Activated CD4-positive, alpha-beta memory T cell treated with anti-CD3 and anti-CD28 coated beads for 36 hours (primary cell): ENCODE measurements at regions of chr17 and their contacts with region 1.

Region 1: DNA sequence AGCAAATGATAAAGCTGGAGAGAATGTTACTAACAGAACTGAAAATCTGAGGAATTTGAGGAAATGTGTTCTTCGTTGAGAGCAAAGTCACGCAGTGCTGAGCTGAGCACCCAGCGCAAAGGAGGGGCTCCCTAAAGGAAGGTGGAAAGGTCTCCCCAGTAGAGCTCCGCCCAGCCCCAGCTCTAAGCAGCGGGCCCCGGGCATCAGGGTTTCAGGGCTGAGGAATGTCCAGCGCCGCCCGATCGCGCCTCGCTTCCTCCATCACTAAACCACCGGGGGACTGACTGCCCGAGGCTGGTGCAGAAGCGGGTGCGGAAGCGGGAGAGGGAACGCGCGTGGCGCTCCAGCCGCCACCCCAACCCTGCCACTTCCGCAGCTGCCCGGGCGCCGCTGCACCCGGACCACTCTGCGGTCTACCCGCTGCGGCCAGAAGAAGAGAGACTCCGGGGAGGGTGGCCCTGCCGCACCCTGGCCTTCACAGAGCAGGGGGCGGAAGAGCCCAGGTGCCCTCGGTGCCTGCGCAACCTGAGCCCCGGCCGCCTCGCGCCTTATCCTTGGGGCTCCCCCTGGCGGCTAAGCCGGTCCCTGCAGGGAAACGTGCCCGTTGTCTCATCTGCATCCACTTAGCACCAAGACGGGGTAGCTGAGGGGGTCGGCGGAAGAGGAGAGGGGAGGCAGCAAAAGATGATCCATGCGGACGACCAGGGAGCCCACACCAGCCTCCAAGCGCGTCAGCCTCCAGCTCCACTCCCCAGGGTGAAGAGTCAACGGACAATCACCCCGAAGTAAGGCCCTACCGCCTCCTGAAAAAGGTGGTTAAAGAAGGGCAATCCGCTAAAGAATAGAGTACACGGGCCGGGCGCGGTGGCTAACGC is 12.4 kb upstream of the GUCY2D start:
- DNase-seq: peak; percentile 95
- H3K4me3 Mint-ChIP-seq: peak overlapping the region; percentile 51
- H3K27ac Mint-ChIP-seq: peak overlapping the region; percentile 66
- H3K4me1 Mint-ChIP-seq: peaks cover 22% of the 10 kb centered on the region
- H3K27me3 Mint-ChIP-seq: peaks cover under 1% of the 10 kb centered on the region

Region 2: GRCh38 chr17:7740481-7741001 is 249.5 kb before region 1 on chr17:
- CTCF ChIA-PET with region 1: interaction called, 23 read pairs
- POLR2A ChIA-PET with region 1: no interaction called
- intact Hi-C with region 1: loop called (anchors 2 kb)
- DNase-seq: no peak
- H3K4me3 Mint-ChIP-seq: no peak overlapping the region
- H3K27ac Mint-ChIP-seq: no peak overlapping the region
- H3K4me1 Mint-ChIP-seq: no peaks in the 10 kb centered on the region
- H3K27me3 Mint-ChIP-seq: peaks cover 11% of the 10 kb centered on the region

Region 3: DNA sequence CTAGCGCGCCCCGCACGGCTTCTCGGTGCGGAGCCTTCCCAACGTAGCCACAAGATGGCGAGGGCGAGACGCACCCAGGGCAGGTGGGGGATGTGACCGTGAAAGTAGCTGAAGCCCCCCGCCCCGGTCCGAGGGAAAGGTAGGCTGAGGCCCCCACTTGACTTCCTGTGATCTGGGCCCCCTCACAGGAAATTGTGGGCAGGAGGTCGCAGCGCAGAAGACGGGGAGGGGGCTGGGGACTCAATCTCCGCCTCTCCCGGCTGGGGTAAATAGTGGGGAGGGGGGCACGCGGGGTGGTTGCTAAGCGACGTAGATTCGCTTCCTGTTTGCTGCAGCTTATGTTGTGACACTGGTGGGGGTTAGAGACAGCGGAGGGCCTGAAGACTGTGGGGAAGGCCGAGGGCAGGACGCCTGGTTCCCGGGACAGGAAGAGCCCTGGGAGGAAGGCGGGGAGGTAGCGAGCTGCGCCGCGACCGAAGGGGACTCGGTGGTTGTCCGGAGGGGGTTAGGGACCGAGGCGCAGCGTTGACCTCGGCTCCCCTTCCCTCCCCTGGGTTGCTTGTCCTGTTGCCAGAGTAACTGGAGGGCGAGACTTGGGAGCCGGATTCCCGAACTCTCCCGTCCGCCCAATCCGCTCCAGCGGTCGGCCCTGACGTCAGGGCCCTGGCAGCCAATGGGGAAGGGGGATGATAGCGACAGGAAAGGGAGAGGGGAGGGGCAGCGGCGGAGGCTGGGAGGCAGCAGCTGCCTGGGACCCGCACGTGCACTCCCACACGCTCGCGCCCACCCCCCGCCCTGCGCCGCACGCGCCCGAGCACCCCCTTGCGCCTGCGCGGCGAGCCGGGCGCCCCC is 154.8 kb before region 1 on chr17:
- CTCF ChIA-PET with region 1: interaction called, 36 read pairs
- POLR2A ChIA-PET with region 1: no interaction called
- intact Hi-C with region 1: no loop called
- DNase-seq: peak; percentile 95
- H3K4me3 Mint-ChIP-seq: peak overlapping the region; percentile 90
- H3K27ac Mint-ChIP-seq: peak overlapping the region; percentile 95
- H3K4me1 Mint-ChIP-seq: peaks cover 43% of the 10 kb centered on the region
- H3K27me3 Mint-ChIP-seq: no peaks in the 10 kb centered on the region

Region 4: GRCh38 chr17:7862692-7863437 is 127.2 kb before region 1 on chr17:
- CTCF ChIA-PET with region 1: interaction called, 134 read pairs
- POLR2A ChIA-PET with region 1: no interaction called
- intact Hi-C with region 1: loop called (anchors 1 kb)
- DNase-seq: peak; percentile 39
- H3K4me3 Mint-ChIP-seq: no peak overlapping the region
- H3K27ac Mint-ChIP-seq: no peak overlapping the region
- H3K4me1 Mint-ChIP-seq: peaks cover 16% of the 10 kb centered on the region
- H3K27me3 Mint-ChIP-seq: no peaks in the 10 kb centered on the region

Region 5: GRCh38 chr17:7915611-7916382 is 74.2 kb before region 1 on chr17 and contains the start of gene RNF227:
- CTCF ChIA-PET with region 1: interaction called, 245 read pairs
- POLR2A ChIA-PET with region 1: interaction called, 6 read pairs
- intact Hi-C with region 1: loop called (anchors 1 kb)
- DNase-seq: peak; percentile 92
- H3K4me3 Mint-ChIP-seq: peak within 1 kb of the TSS; percentile 85
- H3K27ac Mint-ChIP-seq: peak within 1 kb of the TSS; percentile 86
- H3K4me1 Mint-ChIP-seq: peaks cover 29% of the 10 kb centered on the region
- H3K27me3 Mint-ChIP-seq: no peaks in the 10 kb centered on the region
- total RNA-seq, gene RNF227: 2.7 to 3.3 TPM

Region 6: GRCh38 chr17:8016632-8017478 is 26.8 kb after region 1 on chr17:
- CTCF ChIA-PET with region 1: interaction called, 19 read pairs
- POLR2A ChIA-PET with region 1: no interaction called
- intact Hi-C with region 1: no loop called
- DNase-seq: peak; percentile 76
- H3K4me3 Mint-ChIP-seq: peak overlapping the region; percentile 62
- H3K27ac Mint-ChIP-seq: no peak overlapping the region
- H3K4me1 Mint-ChIP-seq: peaks cover 12% of the 10 kb centered on the region
- H3K27me3 Mint-ChIP-seq: peaks cover 8% of the 10 kb centered on the region

Region 7: GRCh38 chr17:8176197-8176940 is 186.4 kb after region 1 on chr17 and contains the start of gene TMEM107:
- CTCF ChIA-PET with region 1: no interaction called
- POLR2A ChIA-PET with region 1: no interaction called
- intact Hi-C with region 1: no loop called
- DNase-seq: peak; percentile 93
- H3K4me3 Mint-ChIP-seq: peak within 1 kb of the TSS; percentile 89
- H3K27ac Mint-ChIP-seq: peak within 1 kb of the TSS; percentile 79
- H3K4me1 Mint-ChIP-seq: peaks cover 40% of the 10 kb centered on the region
- H3K27me3 Mint-ChIP-seq: peaks cover 4% of the 10 kb centered on the region
- total RNA-seq, gene TMEM107: 32.6 to 35.3 TPM